ENCODE measurements at regions of chr3 and their contacts with region 1.

Region 1: DNA sequence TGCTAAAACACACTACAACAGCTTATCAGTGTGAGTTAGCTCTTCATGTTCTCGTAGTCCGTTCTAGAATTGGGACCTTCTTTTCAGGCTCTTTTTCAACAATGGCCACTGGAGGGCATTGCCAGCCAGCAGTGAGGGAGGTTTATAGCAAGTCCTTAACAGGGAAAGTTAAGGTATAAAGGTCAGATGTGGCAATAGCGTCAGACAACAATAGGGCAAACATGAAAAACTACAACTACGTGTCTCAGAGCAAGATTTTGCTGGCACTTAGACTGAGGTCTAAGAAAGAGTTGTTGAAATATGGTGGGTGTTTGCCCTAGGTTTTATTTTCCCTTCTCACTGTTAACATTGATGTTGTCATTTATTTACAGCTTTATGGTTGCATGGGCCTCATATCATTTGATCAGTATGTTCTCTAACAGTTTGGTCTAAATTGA is 161.4 kb downstream of the GMNC start:
- DNase-seq: peak in 3 of 5 donors; percentile 10 to 55 (median 43)
- ATAC-seq: peak; percentile 72 to 84 (median 80)
- H3K4me3 ChIP-seq: no peak overlapping the region
- H3K27ac ChIP-seq: no peak overlapping the region
- H3K4me1 ChIP-seq: peaks cover 0 to 7% (median 0%) of the 10 kb centered on the region in 12 donors
- H3K27me3 ChIP-seq: no peaks in the 10 kb centered on the region
- CTCF ChIP-seq: peak; percentile 27 to 60 (median 46)
- POLR2A ChIP-seq: no peak

Region 2: GRCh38 chr3:189806180-189806951 is 894.7 kb before region 1 on chr3:
- intact Hi-C with region 1: no loop called
- DNase-seq: no peak
- ATAC-seq: no peak
- H3K4me3 ChIP-seq: no peak overlapping the region
- H3K27ac ChIP-seq: no peak overlapping the region
- H3K4me1 ChIP-seq: peaks cover 0 to 7% (median 0%) of the 10 kb centered on the region in 12 donors
- H3K27me3 ChIP-seq: no peaks in the 10 kb centered on the region
- CTCF ChIP-seq: no peak
- POLR2A ChIP-seq: no peak

Region 3: DNA sequence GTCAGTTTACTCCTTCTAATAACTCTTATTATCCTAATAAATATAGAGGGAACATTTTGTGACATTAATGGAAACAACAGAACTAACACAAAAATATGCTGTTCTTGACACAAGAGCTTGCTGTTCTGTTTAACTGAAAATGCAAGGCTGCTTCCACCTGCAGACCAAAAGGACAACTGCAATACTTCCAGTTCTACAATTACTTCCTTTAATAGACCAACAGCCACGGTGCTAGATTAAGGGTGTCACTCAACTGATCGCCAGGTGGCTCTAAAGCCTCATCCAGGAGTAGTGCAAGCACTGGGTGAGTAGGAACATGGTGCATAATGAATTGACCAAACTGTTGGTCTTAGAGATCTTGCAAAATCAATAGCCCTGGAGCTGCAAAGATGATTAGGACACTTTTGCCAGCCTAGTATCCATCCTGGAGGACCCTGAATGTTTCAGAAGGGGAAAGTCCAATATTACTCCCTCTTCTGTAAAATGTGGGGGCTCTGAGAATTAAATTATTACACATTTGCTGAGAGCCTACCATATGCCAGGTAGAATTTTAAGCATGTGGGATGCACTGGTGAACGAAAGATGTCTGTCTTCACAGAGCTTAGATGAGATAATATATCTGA is 316.8 kb before region 1 on chr3:
- intact Hi-C with region 1: loop called in 2 of 10 experiments (anchors 5 to 10 kb)
- DNase-seq: peak in 4 of 5 donors; percentile 13 to 28 (median 25)
- ATAC-seq: peak in 3 of 4 donors; percentile 81 to 90 (median 89)
- H3K4me3 ChIP-seq: no peak overlapping the region
- H3K27ac ChIP-seq: no peak overlapping the region
- H3K4me1 ChIP-seq: no peaks in the 10 kb centered on the region
- H3K27me3 ChIP-seq: no peaks in the 10 kb centered on the region
- CTCF ChIP-seq: peak; percentile 29 to 66 (median 51)
- POLR2A ChIP-seq: no peak

Region 4: DNA sequence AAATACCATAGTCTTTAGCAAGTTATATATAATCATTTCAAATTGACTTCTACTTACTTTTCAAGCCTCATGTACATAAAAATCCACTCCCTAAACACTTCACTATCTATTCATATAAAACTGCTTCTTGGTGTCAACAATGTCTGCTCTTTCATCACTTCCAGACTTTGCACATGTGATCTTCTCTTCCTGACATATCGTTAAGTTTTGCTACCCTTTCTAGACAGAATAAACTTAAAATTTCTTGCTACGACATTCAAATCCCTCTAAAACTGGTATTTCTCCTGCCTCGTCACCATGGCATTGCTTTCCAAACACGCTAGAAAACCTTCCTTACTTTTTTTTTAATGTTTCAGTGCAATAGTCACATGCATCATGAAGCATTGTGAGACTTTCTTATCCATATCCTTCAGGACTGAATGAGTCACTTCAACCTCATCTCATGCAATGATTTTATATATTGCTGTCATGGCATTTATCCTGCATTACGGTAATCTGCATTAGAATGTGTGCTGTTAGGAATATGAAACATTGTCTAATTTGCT is 38.6 kb after region 1 on chr3:
- intact Hi-C with region 1: no loop called
- DNase-seq: no peak
- ATAC-seq: no peak
- H3K4me3 ChIP-seq: no peak overlapping the region
- H3K27ac ChIP-seq: no peak overlapping the region
- H3K4me1 ChIP-seq: no peaks in the 10 kb centered on the region
- H3K27me3 ChIP-seq: no peaks in the 10 kb centered on the region
- CTCF ChIP-seq: no peak
- POLR2A ChIP-seq: no peak

Region 5: GRCh38 chr3:190811775-190812480 is 110.8 kb after region 1 on chr3:
- intact Hi-C with region 1: loop called in 4 of 10 experiments (anchors 2 to 10 kb)
- DNase-seq: peak in 1 of 5 donors; percentile 33
- ATAC-seq: no peak
- H3K4me3 ChIP-seq: no peak overlapping the region
- H3K27ac ChIP-seq: no peak overlapping the region
- H3K4me1 ChIP-seq: peaks cover 0 to 18% (median 1%) of the 10 kb centered on the region in 12 donors
- H3K27me3 ChIP-seq: no peaks in the 10 kb centered on the region
- CTCF ChIP-seq: peak; percentile 24 to 66 (median 50)
- POLR2A ChIP-seq: no peak

Region 6: GRCh38 chr3:190883973-190884832 is 183.1 kb after region 1 on chr3:
- intact Hi-C with region 1: loop called in 1 of 10 experiments (anchors 5 kb)
- DNase-seq: no peak
- ATAC-seq: no peak
- H3K4me3 ChIP-seq: no peak overlapping the region
- H3K27ac ChIP-seq: no peak overlapping the region
- H3K4me1 ChIP-seq: no peaks in the 10 kb centered on the region
- H3K27me3 ChIP-seq: no peaks in the 10 kb centered on the region
- CTCF ChIP-seq: peak; percentile 73 to 94 (median 86)
- POLR2A ChIP-seq: no peak